Gastrocnemius medialis (tissue), 4 donors: ENCODE measurements at regions of chr1 and their contacts with region 1.

Region 1: DNA sequence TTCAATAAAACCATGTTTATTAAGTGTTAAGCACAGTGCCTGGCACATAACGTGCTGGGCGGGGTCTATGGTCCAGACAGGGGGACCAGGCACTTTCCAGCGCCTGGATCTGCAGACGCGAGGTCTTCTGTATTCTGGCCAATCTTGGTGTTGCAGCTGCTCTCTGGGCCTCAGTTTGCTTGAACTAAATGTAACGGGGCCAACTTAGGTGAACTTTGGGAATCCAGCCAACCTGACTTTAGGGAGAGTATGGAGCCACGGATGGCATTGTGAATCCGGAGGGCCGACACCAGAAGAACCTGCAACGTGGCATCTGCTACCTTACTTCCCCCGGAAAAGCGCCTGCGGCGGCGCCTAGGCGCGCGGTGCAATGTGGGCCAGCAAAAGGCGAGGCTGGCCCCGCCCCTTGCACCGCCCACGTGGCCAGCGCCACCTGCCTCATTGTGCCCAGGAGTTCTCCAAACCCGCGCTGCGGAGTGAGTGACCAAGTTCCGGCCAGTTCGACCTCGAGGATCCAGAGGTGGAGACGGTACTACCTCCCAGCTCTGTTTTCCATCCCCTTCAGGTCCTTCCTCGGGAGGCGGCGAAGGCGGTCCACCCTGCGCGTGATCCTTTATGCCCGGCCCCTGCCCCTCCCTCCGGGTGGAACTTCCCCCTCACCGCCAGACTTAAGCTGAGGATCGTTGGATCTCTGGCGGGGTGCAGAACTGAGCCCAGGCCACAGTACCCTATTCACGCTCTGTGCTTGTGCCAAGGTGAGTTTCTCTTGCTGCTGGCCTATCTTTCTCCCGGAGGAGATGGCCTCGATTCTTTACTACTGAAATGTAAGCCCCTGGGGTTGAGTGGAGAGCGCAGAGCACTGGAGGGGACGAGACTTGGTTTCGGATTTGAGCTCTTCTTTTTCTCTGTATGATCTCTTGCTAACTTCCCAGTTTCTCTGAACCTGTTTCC is at the start of gene AKR1A1:
- DNase-seq: peak; percentile 72 to 82
- ATAC-seq: peak; percentile 96
- H3K4me3 ChIP-seq: peak within 1 kb of the TSS; percentile 71 to 90 (median 86)
- H3K27ac ChIP-seq: peak within 1 kb of the TSS; percentile 88 to 94 (median 93)
- H3K4me1 ChIP-seq: peaks cover 9 to 11% of the 10 kb centered on the region in 2 donors
- H3K27me3 ChIP-seq: no peaks in the 10 kb centered on the region
- CTCF ChIP-seq: peak in 3 of 5 experiments; percentile 5 to 25 (median 21)
- POLR2A ChIP-seq: peak; percentile 57 to 64
- total RNA-seq, gene AKR1A1: 15.6 to 40.1 (median 37.1) TPM

Region 2: GRCh38 chr1:45499415-45499769 is 51.3 kb before region 1 on chr1:
- in situ Hi-C with region 1: no loop called
- intact Hi-C with region 1: loop called (anchors 1 kb)
- DNase-seq: no peak
- ATAC-seq: no peak
- H3K4me3 ChIP-seq: peak overlapping the region; percentile 73 to 81 (median 78)
- H3K27ac ChIP-seq: peak overlapping the region; percentile 74 to 87 (median 82)
- H3K4me1 ChIP-seq: peaks cover 17 to 19% of the 10 kb centered on the region in 2 donors
- H3K27me3 ChIP-seq: no peaks in the 10 kb centered on the region
- CTCF ChIP-seq: no peak
- POLR2A ChIP-seq: no peak

Region 3: DNA sequence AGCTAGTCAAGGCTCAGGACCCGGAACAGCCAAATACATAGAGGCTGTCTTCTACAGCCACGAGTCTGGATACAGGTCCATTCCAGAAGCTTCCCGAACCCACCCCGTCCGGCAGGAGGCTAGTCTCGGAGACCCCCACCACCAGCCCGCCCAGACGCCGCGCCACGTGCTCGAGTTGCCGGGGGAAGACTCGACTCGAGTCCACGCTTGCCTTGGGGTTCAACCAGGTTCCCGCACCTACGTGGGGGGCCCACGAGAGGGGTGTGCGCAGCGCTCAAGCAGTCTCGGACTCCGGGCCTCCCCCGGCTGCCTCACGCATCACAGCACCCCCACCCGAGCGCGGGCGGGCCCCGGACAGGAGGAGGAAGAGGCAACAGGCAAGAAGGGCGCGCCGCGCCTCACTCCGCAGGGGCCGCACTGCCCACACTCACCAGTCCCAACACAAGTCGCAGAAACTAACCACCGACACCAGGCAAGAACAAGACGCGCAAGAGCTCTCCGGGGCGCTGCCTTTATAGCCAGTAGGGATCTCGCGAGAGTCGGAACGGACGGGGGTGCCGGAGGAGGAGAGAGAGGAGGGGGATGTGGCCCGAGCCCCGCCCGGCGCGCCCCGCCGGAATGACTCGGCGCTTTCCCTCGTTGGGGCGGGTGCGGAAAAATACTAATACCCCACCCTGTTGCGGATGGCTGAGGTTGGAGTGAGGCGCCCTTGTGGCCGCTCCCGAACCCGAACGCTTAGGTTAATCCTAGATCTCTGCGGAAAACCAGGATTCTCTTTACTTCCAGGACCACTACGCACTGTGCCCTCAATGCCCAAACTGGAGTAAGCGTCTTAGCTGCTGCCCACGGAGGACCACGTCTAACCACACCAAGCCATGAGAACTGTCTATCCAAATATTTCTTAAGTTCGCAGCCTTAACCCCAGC is 29.0 kb before region 1 on chr1 and contains the start of gene PRDX1:
- in situ Hi-C with region 1: no loop called
- intact Hi-C with region 1: loop called (anchors 1 kb)
- DNase-seq: peak; percentile 95
- ATAC-seq: peak; percentile 97 to 98
- H3K4me3 ChIP-seq: peak within 1 kb of the TSS; percentile 86 to 99 (median 96)
- H3K27ac ChIP-seq: peak within 1 kb of the TSS; percentile 89 to 98 (median 94)
- H3K4me1 ChIP-seq: peaks cover 15 to 18% of the 10 kb centered on the region in 2 donors
- H3K27me3 ChIP-seq: no peaks in the 10 kb centered on the region
- CTCF ChIP-seq: peak in 2 of 5 experiments; percentile 21 to 23
- POLR2A ChIP-seq: peak; percentile 99
- total RNA-seq, gene PRDX1: 406 to 554 (median 482) TPM

Region 4: DNA sequence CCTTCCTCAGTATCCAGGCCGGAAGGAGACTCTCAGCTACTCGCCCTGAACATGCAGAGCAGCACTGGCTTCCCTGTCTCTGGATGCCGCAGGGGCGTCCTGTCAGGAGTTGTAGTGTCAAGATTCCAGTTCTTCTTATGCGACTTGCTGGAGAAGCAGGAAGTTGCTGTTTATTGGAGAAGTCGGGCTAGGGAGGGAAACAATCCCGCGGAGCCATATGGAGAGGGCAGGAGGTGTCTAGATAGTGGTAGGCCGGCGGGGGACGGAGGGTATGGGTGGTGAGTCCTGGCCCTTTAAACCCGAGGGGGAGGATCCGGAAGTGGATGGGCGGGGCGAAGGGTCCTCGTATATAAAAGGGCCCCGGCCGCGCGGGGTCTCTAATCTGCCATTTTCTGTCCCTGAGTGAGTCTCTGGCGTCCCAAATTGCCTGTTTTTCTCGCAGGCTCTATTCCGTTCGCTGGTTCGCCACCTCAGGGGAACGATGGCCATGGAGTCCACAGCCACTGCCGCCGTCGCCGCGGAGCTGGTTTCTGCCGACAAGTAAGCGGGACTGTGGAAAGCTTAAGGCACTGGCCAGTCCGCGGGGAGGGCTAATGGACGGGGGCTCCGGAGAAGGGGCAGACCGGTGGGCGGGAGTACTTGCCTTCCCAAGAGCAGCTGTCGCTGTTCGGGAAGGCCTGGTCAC is 33.1 kb after region 1 on chr1 and contains the start of gene NASP:
- in situ Hi-C with region 1: no loop called
- intact Hi-C with region 1: no loop called
- DNase-seq: peak; percentile 83 to 88
- ATAC-seq: peak; percentile 83 to 85
- H3K4me3 ChIP-seq: peak within 1 kb of the TSS; percentile 82 to 97 (median 94)
- H3K27ac ChIP-seq: peak within 1 kb of the TSS; percentile 92 to 99 (median 96)
- H3K4me1 ChIP-seq: peaks cover 22 to 23% of the 10 kb centered on the region in 2 donors
- H3K27me3 ChIP-seq: no peaks in the 10 kb centered on the region
- CTCF ChIP-seq: peak in 1 of 5 experiments; percentile 8
- POLR2A ChIP-seq: peak; percentile 91 to 97
- total RNA-seq, gene NASP: 25.5 to 32.7 (median 27.3) TPM